IMR-90 (cell line): ENCODE measurements at regions of chr5 and their contacts with region 1.

Region 1: GRCh38 chr5:65721720-65722574 is at the starts of genes NLN and SGTB:
- DNase-seq: peak; percentile 66
- ATAC-seq: peak; percentile 95
- H3K4me3 ChIP-seq: peak within 1 kb of the TSS; percentile 98
- H3K27ac ChIP-seq: peak within 1 kb of the TSS; percentile 73
- H3K4me1 ChIP-seq: peaks cover 4% of the 10 kb centered on the region
- H3K27me3 ChIP-seq: no peaks in the 10 kb centered on the region
- CTCF ChIP-seq: no peak
- POLR2A ChIP-seq: no peak; the same call in 1 of the 2 replicates
- RAD21 ChIP-seq: no peak
- total RNA-seq, gene NLN: 37.1 and 50.3 TPM in 2 replicates
- total RNA-seq, gene SGTB: 15.1 and 25.6 TPM in 2 replicates

Region 2: DNA sequence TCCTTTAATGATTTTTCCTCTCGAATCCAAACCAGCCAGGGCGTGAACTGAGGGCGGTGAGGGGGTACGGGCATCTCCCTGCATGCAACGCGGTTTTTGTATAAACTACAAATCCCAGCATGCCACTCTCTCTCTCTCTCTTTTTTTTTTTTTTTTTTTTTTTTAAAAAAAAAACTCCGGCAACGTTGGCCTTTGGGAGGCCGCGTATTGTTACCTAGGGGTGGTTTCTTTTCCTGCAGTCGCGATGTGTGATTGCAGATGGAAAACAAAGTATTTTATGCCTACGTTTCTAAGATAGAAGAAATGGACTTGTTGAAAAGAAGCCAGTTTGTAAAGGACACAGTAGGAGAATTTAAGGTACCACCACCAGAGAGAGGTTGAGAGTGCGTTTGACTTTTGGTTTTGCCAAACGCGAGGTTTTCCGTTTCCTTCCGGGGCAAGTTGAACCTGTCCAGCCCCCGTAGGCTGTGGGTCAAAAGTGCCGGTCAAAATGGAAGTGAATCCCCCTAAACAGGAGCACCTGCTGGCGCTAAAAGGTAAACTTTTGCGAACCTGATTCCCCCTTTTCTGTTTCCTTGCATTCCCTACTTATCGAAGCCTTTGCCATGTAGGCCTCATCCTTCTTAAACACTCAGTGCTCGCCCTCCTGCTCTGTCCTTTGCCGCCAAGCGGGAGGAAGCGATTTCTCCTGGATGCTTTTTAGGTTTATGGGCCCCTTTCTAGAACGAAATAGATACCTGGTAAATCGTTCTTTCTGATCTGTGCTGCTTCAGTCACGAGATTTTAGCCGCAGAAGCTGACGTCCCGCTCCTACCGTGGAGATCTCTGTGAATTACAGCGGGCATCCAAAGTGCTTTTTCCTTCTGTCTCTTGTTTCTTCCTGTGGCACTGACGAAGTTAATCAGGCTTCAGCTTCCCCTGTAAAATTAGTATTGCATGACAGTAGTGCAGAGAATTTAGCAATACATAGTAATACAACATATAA is 97.1 kb before region 1 on chr5 and contains the starts of genes SHLD3 and TRAPPC13:
- CTCF ChIA-PET with region 1: no interaction called
- POLR2A ChIA-PET with region 1: no interaction called
- dilution Hi-C with region 1: no loop called
- in situ Hi-C with region 1: no loop called
- intact Hi-C with region 1: loop called (anchors 2 kb)
- DNase-seq: peak; percentile 85
- ATAC-seq: peak; percentile 79
- H3K4me3 ChIP-seq: peak within 1 kb of the TSS; percentile 77
- H3K27ac ChIP-seq: peak within 1 kb of the TSS; percentile 85
- H3K4me1 ChIP-seq: no peaks in the 10 kb centered on the region
- H3K27me3 ChIP-seq: no peaks in the 10 kb centered on the region
- CTCF ChIP-seq: no peak
- POLR2A ChIP-seq: peak; percentile 50; the same call in 1 of the 2 replicates
- RAD21 ChIP-seq: no peak
- total RNA-seq, gene SHLD3: 2.5 and 3.9 TPM in 2 replicates
- total RNA-seq, gene TRAPPC13: 17.2 and 26.7 TPM in 2 replicates

Region 3: DNA sequence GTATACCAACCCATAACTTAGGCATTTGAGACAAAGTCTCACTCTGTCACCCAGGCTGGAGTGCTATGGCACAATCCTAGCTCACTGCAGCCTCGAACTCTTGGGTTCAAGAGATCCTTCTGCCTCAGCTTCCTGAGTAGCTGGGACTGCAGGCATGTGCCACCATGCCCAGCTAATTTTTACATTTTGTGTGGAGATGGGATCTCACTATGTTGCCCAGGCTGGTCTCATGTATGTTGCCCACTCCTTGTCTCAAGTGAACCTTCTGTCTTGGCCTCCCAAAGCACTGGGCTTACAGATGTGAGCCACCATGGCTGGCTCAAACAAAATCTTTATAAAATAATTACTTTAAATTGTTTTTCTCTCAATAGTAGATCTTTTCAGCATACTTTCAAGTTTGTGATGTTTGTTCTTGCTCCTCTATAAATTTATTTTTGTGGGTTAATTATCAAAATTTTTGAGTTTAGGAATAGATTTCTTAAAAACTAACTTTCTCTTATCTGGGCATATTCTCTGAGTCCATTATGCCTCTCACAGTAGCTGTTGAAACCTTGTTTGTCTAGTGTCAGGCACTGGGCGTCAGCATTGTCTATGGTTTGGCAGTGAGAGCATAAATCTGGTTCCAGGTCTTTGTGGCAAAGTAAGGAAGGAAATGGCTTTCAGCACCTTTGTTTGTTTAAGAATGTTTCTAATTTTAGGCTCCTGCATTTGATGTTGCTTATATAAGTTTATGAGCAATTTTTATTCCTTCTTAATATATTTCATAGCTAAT is 38.7 kb after region 1 on chr5:
- CTCF ChIA-PET with region 1: no interaction called
- POLR2A ChIA-PET with region 1: no interaction called
- dilution Hi-C with region 1: no loop called
- in situ Hi-C with region 1: no loop called
- intact Hi-C with region 1: loop called (anchors 1 kb)
- DNase-seq: peak; percentile 13
- ATAC-seq: no peak
- H3K4me3 ChIP-seq: no peak overlapping the region
- H3K27ac ChIP-seq: no peak overlapping the region
- H3K4me1 ChIP-seq: peaks cover 2% of the 10 kb centered on the region; the same call in 1 of the 2 replicates
- H3K27me3 ChIP-seq: no peaks in the 10 kb centered on the region
- CTCF ChIP-seq: no peak
- POLR2A ChIP-seq: no peak
- RAD21 ChIP-seq: peak; percentile 45

Region 4: GRCh38 chr5:65948115-65948747 is 226.3 kb after region 1 on chr5:
- CTCF ChIA-PET with region 1: no interaction called
- POLR2A ChIA-PET with region 1: no interaction called
- dilution Hi-C with region 1: no loop called
- in situ Hi-C with region 1: no loop called
- intact Hi-C with region 1: loop called (anchors 1 kb)
- DNase-seq: peak; percentile 70
- ATAC-seq: peak; percentile 79
- H3K4me3 ChIP-seq: no peak overlapping the region
- H3K27ac ChIP-seq: peak overlapping the region; percentile 72
- H3K4me1 ChIP-seq: peaks cover 16% of the 10 kb centered on the region
- H3K27me3 ChIP-seq: no peaks in the 10 kb centered on the region
- CTCF ChIP-seq: no peak
- POLR2A ChIP-seq: no peak
- RAD21 ChIP-seq: no peak

Region 5: DNA sequence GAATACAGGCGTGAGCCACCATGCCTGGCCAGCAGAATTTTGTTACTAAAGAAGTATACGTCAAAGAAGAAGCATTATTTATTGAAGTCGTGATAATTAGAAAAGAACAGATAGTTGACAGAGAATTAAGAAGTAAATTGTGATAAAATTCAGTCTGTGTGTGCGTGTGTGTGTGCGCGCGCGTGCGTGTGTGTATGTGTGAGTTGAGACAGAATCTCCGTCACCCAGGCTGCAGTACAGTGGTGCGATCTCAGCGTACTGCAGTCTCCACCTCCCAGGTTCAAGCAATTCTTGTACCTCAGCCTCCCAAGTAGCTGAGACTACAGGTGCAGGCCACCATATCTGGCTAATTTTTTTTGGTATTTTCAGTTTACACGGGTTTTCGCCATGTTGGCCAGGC is 282.3 kb after region 1 on chr5:
- CTCF ChIA-PET with region 1: no interaction called
- POLR2A ChIA-PET with region 1: interaction called, 18 read pairs
- dilution Hi-C with region 1: no loop called
- in situ Hi-C with region 1: no loop called
- intact Hi-C with region 1: no loop called
- DNase-seq: no peak
- ATAC-seq: no peak
- H3K4me3 ChIP-seq: no peak overlapping the region
- H3K27ac ChIP-seq: no peak overlapping the region
- H3K4me1 ChIP-seq: peaks cover 2% of the 10 kb centered on the region; the same call in 1 of the 2 replicates
- H3K27me3 ChIP-seq: no peaks in the 10 kb centered on the region
- CTCF ChIP-seq: no peak
- POLR2A ChIP-seq: no peak
- RAD21 ChIP-seq: no peak

Region 6: DNA sequence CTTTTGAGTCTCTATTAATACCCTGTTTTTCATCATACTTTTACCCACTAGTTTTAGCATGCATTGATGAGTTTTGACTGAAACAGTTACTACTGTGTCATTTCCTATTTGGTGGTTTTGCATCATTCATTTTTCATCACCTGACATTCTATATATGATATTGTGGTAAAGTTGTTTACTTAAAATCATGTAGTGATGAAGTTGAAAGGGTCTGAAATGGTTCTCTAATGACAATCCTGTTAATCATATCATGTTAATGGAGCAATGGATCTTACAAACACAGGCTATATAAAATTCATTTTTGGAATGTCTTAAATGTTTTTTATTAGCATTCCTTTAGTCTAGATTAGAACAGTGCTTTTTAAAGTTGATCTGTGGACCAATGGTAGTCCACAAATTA is 288.5 kb after region 1 on chr5:
- CTCF ChIA-PET with region 1: no interaction called
- POLR2A ChIA-PET with region 1: no interaction called
- dilution Hi-C with region 1: no loop called
- in situ Hi-C with region 1: no loop called
- intact Hi-C with region 1: loop called (anchors 5 kb)
- DNase-seq: peak; percentile 39
- ATAC-seq: peak; percentile 68
- H3K4me3 ChIP-seq: no peak overlapping the region
- H3K27ac ChIP-seq: no peak overlapping the region
- H3K4me1 ChIP-seq: peaks cover 2% of the 10 kb centered on the region; the same call in 1 of the 2 replicates
- H3K27me3 ChIP-seq: no peaks in the 10 kb centered on the region
- CTCF ChIP-seq: no peak
- POLR2A ChIP-seq: no peak
- RAD21 ChIP-seq: no peak

Region 7: DNA sequence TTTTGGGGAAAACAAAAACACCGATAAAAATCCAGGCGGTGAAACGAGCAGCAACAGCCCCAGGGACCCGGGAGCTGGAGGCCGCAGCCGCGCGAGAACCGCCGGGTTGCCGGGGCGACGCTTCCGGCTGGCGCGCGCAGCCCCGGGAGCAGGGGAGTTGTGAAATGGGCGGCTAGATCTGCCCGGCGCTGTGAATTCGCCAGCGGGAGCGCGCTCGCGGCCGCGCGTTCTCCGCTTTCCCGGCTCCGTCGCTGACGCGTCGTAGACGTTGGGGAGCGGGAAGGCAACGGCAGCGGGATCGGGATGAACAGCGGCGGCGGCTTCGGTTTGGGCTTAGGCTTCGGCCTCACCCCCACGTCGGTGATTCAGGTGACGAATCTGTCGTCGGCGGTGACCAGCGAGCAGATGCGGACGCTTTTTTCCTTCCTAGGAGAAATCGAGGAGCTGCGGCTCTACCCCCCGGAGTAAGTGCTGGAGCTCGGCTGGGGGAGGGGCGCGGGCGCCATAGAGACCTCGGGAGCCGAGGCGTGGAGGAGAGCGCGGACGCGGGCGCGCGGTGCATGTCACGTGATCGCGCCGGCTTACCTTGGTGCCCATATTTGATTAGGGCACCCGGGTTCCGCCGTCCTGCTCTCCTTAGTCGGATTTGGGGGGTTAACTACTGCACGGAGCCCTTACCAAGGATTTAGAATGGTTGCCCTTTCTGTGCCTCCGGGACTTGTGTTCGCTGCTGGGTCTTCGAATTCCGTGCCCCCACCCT is 422.3 kb after region 1 on chr5 and contains the start of gene SREK1:
- CTCF ChIA-PET with region 1: interaction called, 3 read pairs
- POLR2A ChIA-PET with region 1: no interaction called
- dilution Hi-C with region 1: no loop called
- in situ Hi-C with region 1: no loop called
- intact Hi-C with region 1: loop called (anchors 10 kb)
- DNase-seq: peak; percentile 92
- ATAC-seq: peak; percentile 91
- H3K4me3 ChIP-seq: peak within 1 kb of the TSS; percentile 93
- H3K27ac ChIP-seq: peak within 1 kb of the TSS; percentile 79
- H3K4me1 ChIP-seq: no peaks in the 10 kb centered on the region; the same call in 1 of the 2 replicates
- H3K27me3 ChIP-seq: no peaks in the 10 kb centered on the region
- CTCF ChIP-seq: no peak
- POLR2A ChIP-seq: peak; percentile 94
- RAD21 ChIP-seq: no peak
- total RNA-seq, gene SREK1: 36.2 and 80.0 TPM in 2 replicates